Psoas muscle (tissue), 8 donors: ENCODE measurements at regions of chr15 and their contacts with region 1.

Region 1: GRCh38 chr15:68924866-68925560 is 5.3 kb upstream of the SPESP1 start:
- DNase-seq: peak; percentile 72 to 82
- ATAC-seq: peak; percentile 54 to 81 (median 74)
- H3K4me3 ChIP-seq: no peak overlapping the region
- H3K27ac ChIP-seq: no peak overlapping the region
- H3K4me1 ChIP-seq: no peaks in the 10 kb centered on the region
- H3K27me3 ChIP-seq: peaks cover 0 to 22% (median 0%) of the 10 kb centered on the region in 3 donors
- CTCF ChIP-seq: peak; percentile 74

Region 2: GRCh38 chr15:68550481-68551295 is 374.3 kb before region 1 on chr15:
- intact Hi-C with region 1: loop called (anchors 2 to 5 kb)
- DNase-seq: peak; percentile 63 to 80
- ATAC-seq: peak in 3 of 4 donors; percentile 46 to 76 (median 58)
- H3K4me3 ChIP-seq: no peak overlapping the region
- H3K27ac ChIP-seq: no peak overlapping the region
- H3K4me1 ChIP-seq: no peaks in the 10 kb centered on the region
- H3K27me3 ChIP-seq: peaks cover 0 to 5% (median 0%) of the 10 kb centered on the region in 3 donors
- CTCF ChIP-seq: peak; percentile 95